ENCODE measurements at regions of chr3 and their contacts with region 1.

Region 1: DNA sequence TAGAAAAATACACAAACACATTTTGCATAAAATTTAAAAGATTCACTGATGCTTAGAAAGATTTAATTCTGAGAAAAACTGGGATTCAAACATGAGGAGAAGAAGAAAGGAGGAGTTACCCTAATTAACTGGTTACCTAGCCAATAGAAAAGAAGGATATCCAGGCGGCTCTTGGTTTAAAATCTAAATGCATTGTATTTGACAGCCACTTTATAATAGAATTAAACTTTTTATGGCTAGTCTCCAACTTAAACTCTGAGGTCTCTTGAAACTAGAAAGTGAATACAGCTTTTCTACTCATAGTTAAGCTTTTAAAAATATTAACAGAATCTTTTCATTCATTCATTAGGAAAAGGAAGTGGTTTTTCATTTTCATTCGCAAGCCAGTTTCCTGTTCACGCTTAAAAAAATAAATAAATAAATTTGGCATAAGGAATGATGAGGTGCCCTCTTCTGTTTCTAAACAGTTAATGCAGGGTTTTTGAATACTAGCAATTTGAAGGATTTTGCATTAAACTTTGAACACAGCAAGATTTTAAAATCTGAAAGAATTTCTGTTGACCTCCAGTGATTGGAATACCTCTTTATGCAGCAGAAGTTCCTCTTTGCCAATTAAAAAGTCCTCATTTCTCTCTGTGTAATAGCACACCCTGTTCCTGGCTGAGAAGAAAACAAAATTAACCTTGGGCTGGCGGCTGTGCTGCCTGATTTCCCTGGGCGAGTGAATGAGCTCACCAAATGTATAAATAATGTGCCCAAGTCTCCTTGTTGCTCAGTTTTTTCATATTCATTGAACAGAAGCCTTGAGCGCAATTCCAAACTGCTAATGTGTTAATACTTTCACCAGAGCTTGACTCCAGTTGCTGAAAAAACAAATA is 105.1 kb downstream of the ZMAT3 start:
- DNase-seq: no peak

Region 2: DNA sequence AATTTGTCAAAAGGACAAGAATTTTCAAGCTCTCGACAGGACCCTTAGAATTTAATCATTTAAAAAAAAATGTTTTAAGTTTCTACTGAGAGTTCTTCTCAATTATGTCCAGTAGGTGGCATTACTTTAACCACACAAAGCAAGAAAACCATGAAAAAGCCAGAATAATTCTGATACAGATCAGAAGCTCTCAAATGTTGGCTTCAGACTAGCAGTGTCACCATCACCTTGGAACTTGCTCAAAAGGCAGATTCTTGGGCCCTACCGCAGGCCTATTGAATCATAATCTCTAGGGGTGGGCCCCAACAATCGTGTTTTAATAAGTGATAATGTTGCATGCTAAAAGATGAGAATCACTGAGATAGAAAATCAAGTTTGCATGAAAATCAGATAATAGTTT is 529.8 kb before region 1 on chr3:
- intact Hi-C with region 1: loop called (anchors 5 to 10 kb)
- DNase-seq: no peak

Measured in posterior vena cava (tissue), 2 donors.